Sigmoid colon (tissue), 7 donors: ENCODE measurements at regions of chr9 and their contacts with region 1.

Region 1: GRCh38 chr9:68584189-68585033 is 43.7 kb upstream of the TMEM252 start:
- DNase-seq: peak; percentile 89
- H3K4me3 ChIP-seq: no peak overlapping the region
- H3K27ac ChIP-seq: peak overlapping the region in 1 of 4 donors; percentile 6
- H3K4me1 ChIP-seq: no peaks in the 10 kb centered on the region
- H3K27me3 ChIP-seq: no peaks in the 10 kb centered on the region
- CTCF ChIP-seq: peak; percentile 88 to 98 (median 96)
- EP300 ChIP-seq: no peak
- POLR2A ChIP-seq: no peak

Region 2: DNA sequence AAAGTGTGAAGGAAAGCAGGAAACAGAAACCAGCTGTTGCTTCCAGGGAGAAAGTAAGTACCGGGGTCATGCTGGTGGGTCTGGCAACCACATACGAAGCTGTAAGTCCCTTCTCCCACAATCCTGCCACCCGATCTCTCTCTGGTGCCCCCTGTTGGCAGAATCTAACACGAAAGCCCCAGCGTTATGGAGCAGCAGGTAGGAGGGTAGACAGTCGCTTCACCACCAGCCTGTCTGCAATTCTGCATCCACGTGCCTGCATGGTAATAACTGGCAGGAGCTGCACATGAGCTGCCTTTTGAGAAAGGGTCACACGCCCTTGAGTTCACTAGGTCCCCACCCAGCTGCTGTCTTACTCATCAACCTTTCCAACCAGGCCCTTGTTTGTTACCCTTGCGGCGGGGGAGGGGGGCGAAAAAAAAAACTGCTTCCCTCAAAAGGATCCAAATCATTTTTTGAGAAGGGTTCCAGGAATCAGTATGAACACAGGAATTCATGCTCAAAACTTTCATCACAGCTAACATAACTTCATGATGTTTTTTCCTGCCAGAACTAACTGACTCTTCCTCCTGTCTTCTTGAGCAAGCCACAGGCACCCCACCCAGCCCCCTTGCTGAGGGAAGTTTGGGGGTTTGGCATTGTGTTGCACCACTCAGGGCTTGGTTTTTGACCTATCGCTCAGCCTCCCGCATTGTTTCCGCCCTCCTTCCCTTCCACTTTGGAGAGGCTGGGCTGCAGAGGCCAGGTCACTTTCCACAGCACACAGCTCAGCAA is 24.2 kb before region 1 on chr9:
- intact Hi-C with region 1: no loop called
- DNase-seq: peak; percentile 83
- H3K4me3 ChIP-seq: no peak overlapping the region
- H3K27ac ChIP-seq: peak overlapping the region; percentile 42 to 79 (median 58)
- H3K4me1 ChIP-seq: peaks cover 0 to 32% (median 18%) of the 10 kb centered on the region in 4 donors
- H3K27me3 ChIP-seq: no peaks in the 10 kb centered on the region
- CTCF ChIP-seq: peak in 2 of 4 experiments; percentile 15 to 27
- EP300 ChIP-seq: no peak
- POLR2A ChIP-seq: no peak

Region 3: DNA sequence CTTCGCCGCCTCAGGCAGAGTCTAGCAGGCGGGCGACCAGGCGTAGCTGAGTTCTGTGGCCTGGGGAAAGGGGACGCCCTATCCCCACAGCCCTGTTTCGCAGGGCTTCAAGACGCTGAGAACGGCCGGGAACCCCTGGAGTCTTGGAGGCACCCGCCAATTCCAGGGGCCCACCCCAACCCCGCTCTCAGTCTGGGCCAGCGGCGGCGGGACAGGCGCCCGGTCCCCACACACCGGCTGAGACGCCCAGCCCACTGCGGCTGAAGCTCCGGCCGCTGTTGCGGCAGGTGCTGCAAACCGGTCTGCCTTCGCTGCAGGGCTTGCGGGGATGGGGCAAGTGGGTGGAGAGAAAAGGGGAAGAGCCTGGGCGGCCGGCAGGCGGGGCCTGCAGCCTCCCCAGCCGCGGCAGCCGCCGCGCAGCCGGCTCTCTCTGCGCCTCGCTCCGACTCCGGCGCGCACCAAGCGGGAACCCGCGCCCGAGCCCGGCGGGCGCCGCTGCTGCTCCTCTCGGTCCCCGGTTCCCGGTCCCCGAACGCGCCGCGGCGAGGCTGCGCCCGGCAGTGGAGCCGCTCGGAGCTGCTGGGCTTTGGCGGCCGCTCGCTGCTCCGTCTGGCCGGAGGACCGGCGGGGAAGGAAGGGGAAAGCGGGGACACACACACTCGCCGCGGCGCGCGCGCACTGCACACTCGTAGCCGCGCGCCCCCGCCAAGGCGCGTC is 120.6 kb after region 1 on chr9 and contains the start of gene PIP5K1B:
- intact Hi-C with region 1: loop called (anchors 5 kb)
- DNase-seq: peak; percentile 83
- H3K4me3 ChIP-seq: peak within 1 kb of the TSS; percentile 51 to 88 (median 74)
- H3K27ac ChIP-seq: peak within 1 kb of the TSS; percentile 46 to 88 (median 85)
- H3K4me1 ChIP-seq: peaks cover 0 to 29% (median 12%) of the 10 kb centered on the region in 4 donors
- H3K27me3 ChIP-seq: peaks cover 0 to 9% (median 0%) of the 10 kb centered on the region in 3 donors
- CTCF ChIP-seq: no peak
- EP300 ChIP-seq: no peak
- POLR2A ChIP-seq: peak in 1 of 2 donors; percentile 67
- total RNA-seq, gene PIP5K1B: 10.3 to 23.5 (median 17.5) TPM

Region 4: DNA sequence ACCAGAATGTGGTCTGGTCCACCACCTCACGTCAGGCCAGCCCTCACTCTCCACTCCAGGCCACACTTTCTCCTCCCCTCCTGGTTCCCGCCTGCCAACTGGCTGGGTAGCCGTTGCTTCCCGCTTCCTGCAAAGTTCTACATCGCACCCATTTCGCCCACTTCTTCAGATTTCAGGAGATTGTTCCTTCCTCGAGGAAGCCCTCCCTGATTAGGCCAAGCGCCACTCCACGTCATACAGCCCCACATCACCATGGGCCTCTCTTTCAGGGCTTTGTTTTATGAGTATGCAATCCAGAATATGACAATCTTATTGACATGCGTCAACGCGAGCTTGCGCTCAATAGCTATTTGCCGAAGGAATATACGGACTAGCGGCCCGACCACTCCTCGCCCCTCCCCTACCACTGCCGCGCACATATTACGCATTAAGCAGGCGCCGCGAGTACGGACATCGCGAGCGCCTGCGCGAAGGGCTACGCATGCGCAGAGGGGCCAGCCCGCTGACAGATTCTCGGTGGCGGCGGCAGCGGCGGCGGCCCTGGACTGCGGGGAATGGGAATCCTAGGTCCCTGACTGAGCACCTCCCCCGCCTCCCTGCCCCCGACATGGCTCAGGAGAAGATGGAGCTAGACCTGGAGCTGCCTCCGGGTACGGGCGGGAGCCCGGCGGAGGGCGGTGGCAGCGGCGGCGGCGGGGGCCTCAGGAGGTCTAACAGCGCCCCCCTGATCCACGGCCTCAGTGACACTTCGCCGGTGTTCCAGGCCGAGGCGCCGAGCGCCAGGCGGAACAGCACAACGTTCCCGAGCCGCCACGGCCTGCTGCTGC is 195.4 kb after region 1 on chr9:
- intact Hi-C with region 1: loop called (anchors 5 kb)
- DNase-seq: peak; percentile 97
- H3K4me3 ChIP-seq: peak overlapping the region; percentile 77 to 82 (median 80)
- H3K27ac ChIP-seq: peak overlapping the region; percentile 91 to 95 (median 93)
- H3K4me1 ChIP-seq: peaks cover 0 to 50% (median 46%) of the 10 kb centered on the region in 4 donors
- H3K27me3 ChIP-seq: no peaks in the 10 kb centered on the region
- CTCF ChIP-seq: no peak
- EP300 ChIP-seq: no peak
- POLR2A ChIP-seq: peak; percentile 79 to 84

Region 5: GRCh38 chr9:68895741-68896478 is 311.5 kb after region 1 on chr9:
- intact Hi-C with region 1: loop called (anchors 10 kb)
- DNase-seq: no peak
- H3K4me3 ChIP-seq: no peak overlapping the region
- H3K27ac ChIP-seq: peak overlapping the region in 1 of 4 donors; percentile 11
- H3K4me1 ChIP-seq: no peaks in the 10 kb centered on the region
- H3K27me3 ChIP-seq: no peaks in the 10 kb centered on the region
- CTCF ChIP-seq: no peak
- EP300 ChIP-seq: no peak
- POLR2A ChIP-seq: no peak

Region 6: GRCh38 chr9:68949271-68950000 is 365.0 kb after region 1 on chr9:
- intact Hi-C with region 1: loop called (anchors 10 kb)
- DNase-seq: no peak
- H3K4me3 ChIP-seq: no peak overlapping the region
- H3K27ac ChIP-seq: peak overlapping the region in 3 of 4 donors; percentile 29 to 46 (median 37)
- H3K4me1 ChIP-seq: peaks cover 0 to 2% (median 0%) of the 10 kb centered on the region in 4 donors
- H3K27me3 ChIP-seq: no peaks in the 10 kb centered on the region
- CTCF ChIP-seq: peak in 2 of 4 experiments; percentile 12 to 19
- EP300 ChIP-seq: no peak
- POLR2A ChIP-seq: no peak

Region 7: DNA sequence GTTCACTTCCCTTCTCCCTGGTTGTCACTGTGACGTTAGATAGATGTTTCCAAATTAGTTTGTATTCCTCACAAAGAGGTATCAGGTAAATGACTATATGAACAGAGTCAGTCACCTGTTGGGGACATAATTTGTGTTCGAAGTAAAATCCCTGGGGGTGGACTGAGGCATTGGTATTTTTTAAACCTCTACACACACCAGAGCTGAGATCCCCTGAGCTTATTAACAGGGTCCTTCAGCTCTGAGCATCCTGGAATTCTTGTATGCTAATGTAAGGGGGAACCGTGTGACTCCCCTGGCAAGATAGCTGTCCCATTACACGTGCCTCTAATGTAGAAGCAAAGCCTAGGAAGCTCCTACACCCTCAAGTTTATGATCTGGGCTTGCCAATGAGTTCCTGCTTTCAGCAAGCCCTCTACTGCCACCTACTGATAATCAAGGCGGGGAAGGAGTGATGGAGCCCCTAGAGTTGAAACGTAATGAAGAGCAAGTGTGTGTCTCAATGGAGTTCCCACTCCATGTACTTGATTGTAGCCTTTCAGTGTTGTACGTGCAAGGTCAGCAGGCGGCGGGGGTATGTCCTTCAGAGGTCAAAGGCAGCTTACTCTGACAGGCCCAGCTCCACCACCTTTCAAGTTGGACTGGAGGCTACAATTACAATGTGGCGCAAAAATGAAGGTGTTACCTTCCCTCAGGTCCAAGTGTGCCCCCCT is 415.1 kb after region 1 on chr9:
- intact Hi-C with region 1: loop called (anchors 1 kb)
- DNase-seq: peak; percentile 81
- H3K4me3 ChIP-seq: no peak overlapping the region
- H3K27ac ChIP-seq: peak overlapping the region in 1 of 4 donors; percentile 27
- H3K4me1 ChIP-seq: peaks cover 0 to 27% (median 14%) of the 10 kb centered on the region in 4 donors
- H3K27me3 ChIP-seq: no peaks in the 10 kb centered on the region
- CTCF ChIP-seq: peak; percentile 66 to 85 (median 75)
- EP300 ChIP-seq: no peak
- POLR2A ChIP-seq: no peak

Region 8: DNA sequence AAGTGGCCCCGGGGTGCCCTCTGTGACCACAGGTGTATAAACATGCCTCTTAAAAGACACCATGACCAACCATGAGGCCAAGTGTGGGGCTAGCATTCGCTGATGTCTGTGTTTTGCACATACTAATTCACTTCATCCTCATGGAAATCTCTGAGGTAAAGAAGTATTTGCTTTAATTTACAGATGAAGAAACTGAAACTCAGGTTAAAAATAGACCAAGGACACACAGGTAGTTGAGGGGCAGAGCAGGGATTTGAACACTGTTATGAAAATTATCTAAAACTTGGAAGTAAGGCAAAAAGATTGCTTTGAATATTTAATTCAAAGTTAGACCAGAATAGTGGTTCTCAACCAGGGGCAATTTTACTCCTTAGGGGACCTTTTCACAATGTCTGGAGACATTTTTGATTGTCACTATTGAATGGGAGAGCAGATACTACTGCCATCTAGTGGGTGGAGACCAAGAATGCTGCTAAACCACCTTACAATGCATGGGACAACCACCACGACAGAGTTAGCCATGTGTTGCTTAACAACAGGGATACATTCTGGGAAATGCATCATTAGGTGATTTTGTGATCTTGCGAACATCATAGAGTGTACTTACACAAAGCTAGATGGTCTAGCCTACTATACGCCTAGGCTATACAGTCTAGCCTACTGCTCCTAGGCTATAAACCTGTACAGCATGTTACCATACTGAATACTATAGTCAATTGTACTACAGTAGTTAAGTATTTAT is 443.1 kb after region 1 on chr9:
- intact Hi-C with region 1: loop called (anchors 2 kb)
- DNase-seq: no peak
- H3K4me3 ChIP-seq: no peak overlapping the region
- H3K27ac ChIP-seq: no peak overlapping the region
- H3K4me1 ChIP-seq: no peaks in the 10 kb centered on the region
- H3K27me3 ChIP-seq: no peaks in the 10 kb centered on the region
- CTCF ChIP-seq: peak in 3 of 4 experiments; percentile 53 to 74 (median 59)
- EP300 ChIP-seq: no peak
- POLR2A ChIP-seq: no peak